Left ventricle myocardium superior (tissue), 1 donor: ENCODE measurements at regions of chr4 and their contacts with region 1.

Region 1: DNA sequence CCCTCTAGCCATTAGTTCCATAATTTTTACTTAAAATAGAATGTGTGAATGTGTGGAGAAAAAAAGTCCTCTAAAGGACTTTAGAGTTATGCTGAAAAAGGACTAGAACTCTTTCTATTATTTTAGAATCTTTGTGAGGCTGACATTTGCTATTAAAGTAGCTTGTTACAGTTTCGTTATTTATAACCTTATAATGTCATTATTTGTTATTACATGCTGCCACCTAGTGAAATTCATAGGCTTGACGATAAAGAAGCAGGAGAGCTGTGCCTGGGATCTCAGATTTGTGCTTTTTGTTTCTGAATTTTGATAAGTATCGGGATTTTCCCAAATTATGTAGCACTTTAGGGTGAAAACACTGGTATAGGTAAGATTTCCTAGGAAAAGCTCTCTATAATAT is 38.5 kb upstream of the TAPT1 start:
- DNase-seq: no peak
- ATAC-seq: peak; percentile 63

Region 2: DNA sequence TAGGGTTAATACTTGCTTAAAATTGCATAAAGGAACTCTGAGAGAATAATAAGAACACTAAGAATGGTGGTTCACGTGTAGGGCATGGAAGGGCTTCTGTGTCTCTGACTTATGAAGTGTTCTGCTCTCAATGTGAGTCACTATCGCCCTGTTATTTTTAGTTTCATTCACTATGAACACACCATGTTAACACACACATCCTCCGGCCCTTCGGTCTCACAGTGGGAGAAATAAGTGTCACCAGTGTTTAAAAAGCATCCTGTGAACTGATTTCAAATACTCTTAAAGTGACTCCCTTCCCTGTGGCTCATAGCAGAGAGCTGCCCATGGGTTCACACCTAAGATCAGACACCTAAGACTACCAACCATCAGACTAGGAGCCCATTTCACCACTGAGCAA is 268.0 kb before region 1 on chr4:
- intact Hi-C with region 1: no loop called
- DNase-seq: no peak
- ATAC-seq: peak; percentile 73

Region 3: GRCh38 chr4:16196478-16197393 is 68.1 kb before region 1 on chr4:
- intact Hi-C with region 1: loop called (anchors 10 kb)
- DNase-seq: no peak
- ATAC-seq: peak; percentile 86